Activated CD4-positive, alpha-beta T cell treated with anti-CD3 and anti-CD28 coated beads for 36 hours (primary cell): ENCODE measurements at regions of chr10 and their contacts with region 1.

Region 1: DNA sequence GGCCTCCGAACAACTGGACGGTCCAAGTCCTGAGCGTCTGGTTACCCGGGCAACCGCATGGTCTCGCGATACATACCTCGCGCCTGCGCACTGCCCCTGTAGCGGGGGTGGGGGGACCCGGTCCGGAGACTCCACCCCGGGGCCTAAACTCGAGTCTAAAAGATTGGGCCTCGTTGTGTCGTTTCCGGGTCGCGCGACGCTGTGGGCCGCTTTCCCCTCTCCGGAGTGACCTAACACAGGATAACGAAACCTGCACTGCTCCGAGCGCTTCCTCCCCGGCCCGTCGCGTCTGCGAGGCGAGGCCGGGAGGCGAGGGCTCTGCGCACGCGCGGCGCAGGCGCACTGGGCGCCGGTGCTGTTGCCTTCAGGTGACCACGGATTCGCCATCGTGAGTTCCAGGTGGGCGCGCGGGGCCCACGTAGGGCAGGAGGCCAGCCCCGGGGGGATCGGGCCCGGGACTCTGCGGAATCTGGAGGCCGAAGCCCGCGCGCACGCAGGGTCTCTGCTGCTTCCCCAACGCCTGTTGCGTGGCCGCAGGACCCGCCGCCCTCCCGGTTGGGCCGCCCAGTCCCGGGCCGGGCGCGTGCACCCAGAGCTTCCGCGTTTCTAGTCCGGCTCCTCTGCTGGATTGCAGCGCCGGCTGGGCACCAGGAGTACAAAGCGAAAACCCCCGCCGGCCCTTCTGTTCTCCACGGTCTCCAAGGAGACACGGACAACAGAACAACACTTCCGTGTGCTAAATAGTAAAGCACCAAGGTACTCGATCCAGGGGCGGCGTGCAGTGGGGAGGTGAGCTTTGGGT is at the start of gene RPP38:
- DNase-seq: peak; percentile 97
- ATAC-seq: peak; percentile 95
- H3K4me3 Mint-ChIP-seq: peak within 1 kb of the TSS; percentile 87
- H3K27ac Mint-ChIP-seq: peak within 1 kb of the TSS; percentile 97
- H3K4me1 Mint-ChIP-seq: peaks cover 22% of the 10 kb centered on the region
- H3K27me3 Mint-ChIP-seq: no peaks in the 10 kb centered on the region
- total RNA-seq, gene RPP38: 26.1 to 27.1 TPM

Region 2: GRCh38 chr10:14499601-14499904 is 597.7 kb before region 1 on chr10:
- CTCF ChIA-PET with region 1: no interaction called
- POLR2A ChIA-PET with region 1: no interaction called
- intact Hi-C with region 1: loop called in 1 of 2 experiments (anchors 5 kb)
- DNase-seq: no peak
- ATAC-seq: no peak
- H3K4me3 Mint-ChIP-seq: no peak overlapping the region
- H3K27ac Mint-ChIP-seq: no peak overlapping the region
- H3K4me1 Mint-ChIP-seq: peaks cover 14% of the 10 kb centered on the region
- H3K27me3 Mint-ChIP-seq: no peaks in the 10 kb centered on the region

Region 3: GRCh38 chr10:14878266-14879054 is 218.8 kb before region 1 on chr10 and contains the start of gene SUV39H2:
- CTCF ChIA-PET with region 1: no interaction called
- POLR2A ChIA-PET with region 1: no interaction called
- intact Hi-C with region 1: loop called (anchors 1 kb)
- DNase-seq: peak; percentile 97
- ATAC-seq: peak; percentile 92
- H3K4me3 Mint-ChIP-seq: peak within 1 kb of the TSS; percentile 97
- H3K27ac Mint-ChIP-seq: peak within 1 kb of the TSS; percentile 93
- H3K4me1 Mint-ChIP-seq: peaks cover 37% of the 10 kb centered on the region
- H3K27me3 Mint-ChIP-seq: no peaks in the 10 kb centered on the region
- total RNA-seq, gene SUV39H2: 42.9 to 51.5 TPM

Region 4: DNA sequence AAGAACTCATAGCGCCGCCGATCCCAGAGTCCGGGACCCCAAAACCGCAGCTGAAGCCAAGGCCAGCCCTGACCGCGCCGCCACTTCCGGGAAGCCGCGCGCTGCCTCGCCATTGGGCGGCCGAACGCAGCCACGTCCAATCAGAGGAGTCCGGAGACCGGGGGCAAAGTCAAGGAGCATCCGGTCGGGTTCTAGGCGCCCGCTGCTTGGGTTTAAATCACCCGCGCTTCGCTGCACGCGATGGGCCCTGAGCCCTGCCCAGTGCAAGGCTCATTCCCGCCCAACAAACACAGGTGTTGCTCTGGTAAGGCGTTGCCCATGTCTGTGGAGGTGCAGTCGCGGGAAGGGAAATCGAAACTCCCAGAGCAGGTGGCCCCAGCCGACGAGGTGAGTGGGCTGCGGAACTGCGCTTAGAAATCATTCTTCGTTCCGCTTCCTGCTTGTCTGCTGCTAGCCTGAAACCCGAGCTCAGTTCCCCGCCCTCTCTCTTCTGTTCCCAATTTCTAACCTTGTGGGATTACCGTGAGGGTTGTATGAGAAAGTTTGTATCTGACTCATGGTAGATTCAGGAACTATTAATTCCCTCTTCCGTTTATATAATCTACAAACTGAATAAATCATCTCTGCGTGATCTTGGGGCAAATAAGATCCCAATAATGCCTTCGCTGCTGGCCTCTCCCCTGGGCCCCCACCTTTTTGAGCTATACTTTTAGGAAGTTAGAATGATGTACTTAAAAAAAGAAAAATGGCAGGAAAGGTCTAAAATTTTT is 143.0 kb before region 1 on chr10 and contains the start of gene DCLRE1C:
- CTCF ChIA-PET with region 1: interaction called, 3 read pairs
- POLR2A ChIA-PET with region 1: no interaction called
- intact Hi-C with region 1: loop called (anchors 1 to 5 kb)
- DNase-seq: peak; percentile 94
- ATAC-seq: peak; percentile 94
- H3K4me3 Mint-ChIP-seq: peak within 1 kb of the TSS; percentile 90
- H3K27ac Mint-ChIP-seq: peak within 1 kb of the TSS; percentile 97
- H3K4me1 Mint-ChIP-seq: peaks cover 52% of the 10 kb centered on the region
- H3K27me3 Mint-ChIP-seq: no peaks in the 10 kb centered on the region
- total RNA-seq, gene DCLRE1C: 17.9 to 30.9 TPM

Region 5: DNA sequence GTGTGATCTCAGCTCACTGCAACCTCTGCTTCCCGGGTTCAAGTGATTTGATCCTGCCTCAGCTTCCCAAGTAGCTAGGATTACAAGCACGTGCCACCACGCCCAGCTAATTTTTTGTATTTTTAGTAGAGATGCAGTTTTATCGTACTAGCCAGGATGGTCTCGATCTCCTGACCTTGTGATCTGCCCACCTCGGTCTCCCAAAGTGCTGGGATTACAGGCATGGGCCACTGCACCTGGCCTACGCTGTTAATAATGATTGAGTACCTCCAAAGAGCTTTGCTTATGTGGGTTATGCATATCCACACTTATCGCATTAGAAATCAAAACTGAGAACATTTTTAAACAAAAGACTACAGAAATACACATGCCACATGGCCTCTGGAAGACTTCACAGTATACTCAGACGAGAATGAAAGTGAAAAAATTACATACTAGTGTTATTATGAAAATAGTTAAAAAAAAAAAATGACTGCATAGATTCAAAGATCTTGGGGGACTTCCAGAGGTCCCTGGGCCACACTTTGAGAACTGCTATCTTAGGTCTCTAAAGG is 25.3 kb after region 1 on chr10:
- CTCF ChIA-PET with region 1: no interaction called
- POLR2A ChIA-PET with region 1: no interaction called
- intact Hi-C with region 1: loop called in 1 of 2 experiments (anchors 1 kb)
- DNase-seq: peak; percentile 47
- ATAC-seq: peak; percentile 72
- H3K4me3 Mint-ChIP-seq: peak overlapping the region; percentile 40
- H3K27ac Mint-ChIP-seq: peak overlapping the region; percentile 92
- H3K4me1 Mint-ChIP-seq: peaks cover 36% of the 10 kb centered on the region
- H3K27me3 Mint-ChIP-seq: no peaks in the 10 kb centered on the region

Region 6: GRCh38 chr10:15370856-15371701 is 273.9 kb after region 1 on chr10 and contains the start of gene FAM171A1:
- CTCF ChIA-PET with region 1: no interaction called
- POLR2A ChIA-PET with region 1: no interaction called
- intact Hi-C with region 1: loop called (anchors 2 to 10 kb)
- DNase-seq: peak; percentile 85
- ATAC-seq: peak; percentile 82
- H3K4me3 Mint-ChIP-seq: peak within 1 kb of the TSS; percentile 67
- H3K27ac Mint-ChIP-seq: peak within 1 kb of the TSS; percentile 68
- H3K4me1 Mint-ChIP-seq: peaks cover 16% of the 10 kb centered on the region
- H3K27me3 Mint-ChIP-seq: peaks cover 14% of the 10 kb centered on the region
- total RNA-seq, gene FAM171A1: 4.1 to 5.8 TPM